ENCODE measurements at regions of chr1 and their contacts with region 1.

Region 1: DNA sequence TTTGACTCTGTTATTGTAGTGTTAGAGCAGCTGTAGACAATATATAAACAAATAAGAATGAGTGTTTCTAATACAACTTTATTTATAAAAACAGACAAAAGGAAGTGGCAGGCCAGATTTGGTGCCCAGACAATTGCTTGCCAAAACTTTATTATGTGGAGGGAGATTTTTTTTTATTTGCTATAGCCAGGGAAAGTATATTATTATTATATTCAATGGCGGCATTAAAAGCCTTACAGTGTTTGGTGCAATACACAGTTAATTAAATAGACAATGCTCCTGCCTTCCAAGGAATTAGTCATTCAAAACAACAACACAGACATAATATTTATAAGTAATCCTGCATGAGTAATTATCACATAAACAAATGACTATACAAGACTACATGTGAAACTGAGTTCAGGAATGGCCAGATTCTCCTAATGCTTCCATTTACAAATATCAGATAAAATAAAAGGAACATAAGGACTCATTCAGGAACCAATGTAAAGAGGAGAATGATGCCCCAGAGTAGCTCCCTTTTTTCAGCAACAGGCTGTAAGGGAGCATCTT is 10.6 kb upstream of the RC3H1 start:
- DNase-seq: no peak
- ATAC-seq: no peak
- H3K4me3 ChIP-seq: no peak overlapping the region
- H3K27ac ChIP-seq: no peak overlapping the region
- H3K4me1 ChIP-seq: no peaks in the 10 kb centered on the region
- H3K27me3 ChIP-seq: no peaks in the 10 kb centered on the region
- CTCF ChIP-seq: no peak

Region 2: DNA sequence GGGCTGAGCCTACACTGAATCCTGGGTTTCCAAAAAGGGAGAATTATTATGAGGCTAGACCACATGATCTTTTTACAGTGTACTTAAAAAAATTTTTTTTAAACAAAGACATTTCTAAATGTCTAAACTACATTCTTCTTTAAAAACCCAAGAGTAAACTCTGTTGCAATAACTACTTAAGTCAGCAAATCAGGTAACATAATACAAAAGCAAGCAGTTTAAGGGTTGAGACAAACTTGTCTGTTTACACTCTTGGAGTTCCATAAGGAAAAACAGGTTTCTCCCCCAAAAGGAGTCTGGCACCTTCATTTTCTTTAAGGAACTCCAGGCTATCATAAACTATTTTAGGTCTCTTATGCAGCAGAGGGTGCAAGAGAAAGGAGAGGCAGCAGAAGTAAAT is 350.6 kb before region 1 on chr1:
- intact Hi-C with region 1: no loop called
- DNase-seq: no peak
- ATAC-seq: no peak
- H3K4me3 ChIP-seq: no peak overlapping the region
- H3K27ac ChIP-seq: no peak overlapping the region
- H3K4me1 ChIP-seq: no peaks in the 10 kb centered on the region
- H3K27me3 ChIP-seq: no peaks in the 10 kb centered on the region
- CTCF ChIP-seq: no peak

Region 3: DNA sequence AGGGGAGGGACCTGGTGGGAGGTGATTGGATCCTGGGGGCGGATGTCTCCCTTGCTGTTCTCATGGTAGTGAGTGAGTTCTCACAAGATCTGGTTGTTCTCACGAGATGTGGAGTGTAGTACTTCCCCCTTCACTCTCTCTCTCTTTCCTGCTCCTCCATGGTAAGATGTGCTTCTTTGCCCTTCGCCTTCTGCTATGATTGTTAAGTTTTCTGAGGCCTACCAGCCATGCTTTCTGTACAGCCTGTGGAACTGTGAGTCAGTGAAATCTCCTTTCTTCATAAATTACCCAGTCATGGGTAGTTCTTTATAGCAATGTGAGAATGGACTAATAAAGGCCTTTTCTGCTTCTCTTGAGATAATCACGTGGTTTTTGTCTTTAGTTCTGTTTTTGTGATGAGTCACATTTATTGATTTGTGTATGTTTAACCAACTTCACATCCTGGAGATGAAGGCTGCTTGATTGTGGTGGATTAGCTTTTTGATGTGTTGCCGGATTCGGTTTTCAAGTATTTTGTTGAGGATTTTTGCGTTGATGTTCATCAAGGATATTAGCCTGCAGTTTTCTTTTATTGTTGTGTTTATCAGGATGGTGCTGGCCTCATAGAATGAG is 172.1 kb after region 1 on chr1:
- intact Hi-C with region 1: loop called in 1 of 3 experiments (anchors 5 kb)
- DNase-seq: no peak
- ATAC-seq: no peak
- H3K4me3 ChIP-seq: no peak overlapping the region
- H3K27ac ChIP-seq: no peak overlapping the region
- H3K4me1 ChIP-seq: no peaks in the 10 kb centered on the region
- H3K27me3 ChIP-seq: no peaks in the 10 kb centered on the region
- CTCF ChIP-seq: no peak